Psoas muscle (tissue), 8 donors: ENCODE measurements at regions of chr18 and their contacts with region 1.

Region 1: DNA sequence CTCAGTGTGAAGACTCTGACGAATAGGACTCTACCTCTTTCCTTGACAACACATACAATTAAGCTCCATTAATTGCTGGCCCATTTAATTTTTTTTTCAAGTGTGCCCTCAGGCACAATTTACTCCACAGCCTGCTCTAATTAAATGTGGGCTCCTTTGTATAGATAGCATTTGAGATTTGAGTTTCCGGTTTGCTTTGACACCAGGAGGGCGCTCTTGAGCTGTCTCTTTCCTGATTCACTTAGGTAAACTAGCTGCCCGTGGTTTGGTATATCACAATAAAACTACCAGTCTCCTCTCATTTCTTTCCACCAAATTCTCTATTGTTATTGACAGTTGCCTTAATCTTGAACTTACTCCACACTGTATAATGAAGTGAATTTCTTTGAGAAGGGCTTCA is 666.0 kb downstream of the DSC3 start:
- DNase-seq: no peak
- ATAC-seq: no peak
- H3K4me3 ChIP-seq: no peak overlapping the region
- H3K27ac ChIP-seq: no peak overlapping the region
- H3K4me1 ChIP-seq: no peaks in the 10 kb centered on the region
- H3K27me3 ChIP-seq: no peaks in the 10 kb centered on the region
- CTCF ChIP-seq: no peak

Region 2: GRCh38 chr18:30334781-30335180 is 41.7 kb before region 1 on chr18:
- intact Hi-C with region 1: loop called in 1 of 2 experiments (anchors 5 kb)
- DNase-seq: no peak
- ATAC-seq: no peak
- H3K4me3 ChIP-seq: no peak overlapping the region
- H3K27ac ChIP-seq: no peak overlapping the region
- H3K4me1 ChIP-seq: no peaks in the 10 kb centered on the region
- H3K27me3 ChIP-seq: no peaks in the 10 kb centered on the region
- CTCF ChIP-seq: no peak